ENCODE measurements at regions of chr9 and their contacts with region 1.

Region 1: GRCh38 chr9:15485836-15486666 is 24.7 kb downstream of the PSIP1 start:
- DNase-seq: no peak
- H3K4me3 ChIP-seq: no peak overlapping the region
- H3K27ac ChIP-seq: no peak overlapping the region
- H3K4me1 ChIP-seq: peaks cover 0 to 2% (median 0%) of the 10 kb centered on the region in 4 experiments; a peak in 1 of 7 replicates
- H3K27me3 ChIP-seq: no peaks in the 10 kb centered on the region
- CTCF ChIP-seq: peak in 1 of 3 experiments; percentile 29; a peak in 1 of 4 replicates
- EP300 ChIP-seq: no peak
- POLR2A ChIP-seq: no peak
- RAD21 ChIP-seq: 0 out of 4 replicates have a peak, but pooled peaks of 1 of the 2 experiments have one; percentile 4

Region 2: DNA sequence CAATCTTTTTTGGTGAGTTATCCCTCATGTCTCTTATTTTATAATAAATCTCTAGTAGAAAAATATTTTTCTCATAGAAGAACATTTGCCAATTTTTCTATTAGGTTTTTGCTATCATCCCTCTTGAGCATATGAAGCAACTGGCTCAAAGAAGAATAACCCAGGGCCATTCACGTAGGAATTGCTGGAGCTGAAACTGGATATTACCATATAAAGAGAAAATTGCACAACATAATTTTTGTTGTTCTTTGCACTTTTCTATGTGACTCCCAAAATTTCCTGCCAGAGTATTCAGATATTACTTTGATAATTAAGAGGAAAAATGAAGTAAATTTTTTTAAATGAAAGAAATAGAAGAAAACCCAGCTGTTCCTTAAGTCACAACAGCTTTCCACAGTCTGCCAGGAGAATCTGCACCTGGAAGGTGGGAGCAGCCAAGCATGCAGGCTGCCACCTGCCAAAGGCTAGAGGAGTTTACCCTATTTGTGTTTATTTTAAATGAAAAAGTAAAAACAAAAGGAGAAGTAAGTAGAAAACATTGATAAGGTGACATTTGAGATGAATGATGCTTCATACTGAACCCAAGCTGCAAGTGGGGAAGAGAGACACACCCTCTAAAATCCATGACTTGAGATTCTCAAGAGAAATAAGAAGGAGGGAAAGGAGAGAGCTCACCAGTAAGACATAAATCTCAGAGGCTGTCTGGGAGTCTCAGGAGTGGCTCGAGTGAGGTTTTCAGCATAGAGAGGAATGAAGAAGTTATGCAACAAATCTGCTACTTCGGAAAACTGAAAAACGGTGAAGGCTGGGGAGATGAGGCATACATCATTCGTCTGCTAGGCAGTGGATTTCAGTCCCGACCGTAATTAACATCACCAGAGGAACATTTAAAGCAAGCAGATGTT is 544.3 kb before region 1 on chr9:
- CTCF ChIA-PET with region 1: no interaction called
- POLR2A ChIA-PET with region 1: no interaction called
- DNase-seq: no peak
- H3K4me3 ChIP-seq: no peak overlapping the region
- H3K27ac ChIP-seq: no peak overlapping the region
- H3K4me1 ChIP-seq: no peaks in the 10 kb centered on the region; a peak in 1 of 7 replicates
- H3K27me3 ChIP-seq: no peaks in the 10 kb centered on the region
- CTCF ChIP-seq: no peak
- EP300 ChIP-seq: no peak
- POLR2A ChIP-seq: no peak
- RAD21 ChIP-seq: no peak

Region 3: GRCh38 chr9:15469406-15469805 is 16.6 kb before region 1 on chr9:
- CTCF ChIA-PET with region 1: interaction called, 5 read pairs
- POLR2A ChIA-PET with region 1: interaction called, 12 read pairs
- DNase-seq: no peak
- H3K4me3 ChIP-seq: no peak overlapping the region
- H3K27ac ChIP-seq: no peak overlapping the region
- H3K4me1 ChIP-seq: no peaks in the 10 kb centered on the region
- H3K27me3 ChIP-seq: no peaks in the 10 kb centered on the region
- CTCF ChIP-seq: no peak
- EP300 ChIP-seq: no peak
- POLR2A ChIP-seq: no peak
- RAD21 ChIP-seq: no peak

Region 4: GRCh38 chr9:15501179-15501578 is 15.1 kb after region 1 on chr9:
- CTCF ChIA-PET with region 1: interaction called, 4 read pairs
- POLR2A ChIA-PET with region 1: interaction called, 29 read pairs
- DNase-seq: no peak
- H3K4me3 ChIP-seq: no peak overlapping the region
- H3K27ac ChIP-seq: no peak overlapping the region
- H3K4me1 ChIP-seq: no peaks in the 10 kb centered on the region
- H3K27me3 ChIP-seq: no peaks in the 10 kb centered on the region
- CTCF ChIP-seq: no peak
- EP300 ChIP-seq: no peak
- POLR2A ChIP-seq: no peak
- RAD21 ChIP-seq: no peak